HCT116 (cell line): ENCODE measurements at regions of chr13 and their contacts with region 1.

Region 1: GRCh38 chr13:26707122-26708006 is 53.2 kb downstream of the GPR12 start:
- DNase-seq: peak; percentile 27
- ATAC-seq: peak; percentile 89
- H3K4me3 ChIP-seq: no peak overlapping the region
- H3K27ac ChIP-seq: no peak overlapping the region
- H3K4me1 ChIP-seq: no peaks in the 10 kb centered on the region
- H3K27me3 ChIP-seq: peaks cover 21% of the 10 kb centered on the region
- CTCF ChIP-seq: peak; percentile 51 to 66 (median 62); a peak in 5 of 6 replicates
- POLR2A ChIP-seq: no peak
- RAD21 ChIP-seq: peak; percentile 66

Region 2: DNA sequence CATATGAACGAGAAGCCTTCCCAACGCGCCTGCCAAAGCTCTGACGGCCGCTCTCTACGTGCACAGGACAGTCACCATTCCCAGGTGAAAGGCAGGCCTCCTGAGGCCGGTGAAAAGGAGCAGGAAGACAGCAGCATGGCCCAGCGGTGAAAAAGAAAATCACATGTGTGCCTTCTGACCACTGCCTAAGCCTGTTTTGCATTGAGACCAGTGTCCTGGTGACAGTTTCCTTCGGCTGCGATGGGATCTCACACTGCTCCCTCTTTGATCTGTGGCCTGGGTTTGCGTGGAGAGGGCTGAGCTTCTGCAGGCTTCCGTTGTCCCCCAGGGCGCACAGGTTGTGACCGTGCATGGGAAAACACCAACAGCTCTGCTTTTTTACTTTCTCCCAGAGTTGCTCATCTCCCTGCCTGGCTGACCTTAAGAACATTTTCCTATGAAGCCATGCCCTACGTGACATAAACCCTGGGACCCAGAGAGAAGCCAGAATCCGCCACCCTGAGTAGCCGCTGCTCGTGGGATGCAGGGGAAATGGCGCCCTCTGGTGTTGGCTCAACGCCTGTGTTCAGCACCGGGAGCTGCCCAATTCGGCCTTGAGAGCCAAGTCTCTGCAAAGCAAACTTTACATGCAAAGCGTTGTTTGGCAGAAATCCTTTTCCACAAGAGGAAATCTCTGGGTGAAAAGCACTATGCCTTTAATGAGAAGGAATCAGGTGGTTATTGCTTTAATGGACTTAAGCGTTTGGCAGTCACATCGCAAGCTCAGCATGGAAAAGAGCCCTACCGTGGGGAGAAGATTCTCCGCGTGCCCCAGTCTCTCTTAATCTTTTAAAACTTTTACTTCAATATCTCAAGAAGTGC is 165.4 kb after region 1 on chr13:
- CTCF ChIA-PET with region 1: interaction called, 17 read pairs
- POLR2A ChIA-PET with region 1: no interaction called
- RAD21 ChIA-PET with region 1: interaction called in 1 of 2 experiments, 4 read pairs
- intact Hi-C with region 1: loop called (anchors 1 kb)
- DNase-seq: peak; percentile 24
- ATAC-seq: peak; percentile 97
- H3K4me3 ChIP-seq: no peak overlapping the region
- H3K27ac ChIP-seq: no peak overlapping the region
- H3K4me1 ChIP-seq: no peaks in the 10 kb centered on the region
- H3K27me3 ChIP-seq: peaks cover 24% of the 10 kb centered on the region; the same call in 1 of the 2 replicates
- CTCF ChIP-seq: peak; percentile 34 to 97 (median 96); a peak in 5 of 6 replicates
- POLR2A ChIP-seq: no peak
- RAD21 ChIP-seq: peak; percentile 61

Region 3: DNA sequence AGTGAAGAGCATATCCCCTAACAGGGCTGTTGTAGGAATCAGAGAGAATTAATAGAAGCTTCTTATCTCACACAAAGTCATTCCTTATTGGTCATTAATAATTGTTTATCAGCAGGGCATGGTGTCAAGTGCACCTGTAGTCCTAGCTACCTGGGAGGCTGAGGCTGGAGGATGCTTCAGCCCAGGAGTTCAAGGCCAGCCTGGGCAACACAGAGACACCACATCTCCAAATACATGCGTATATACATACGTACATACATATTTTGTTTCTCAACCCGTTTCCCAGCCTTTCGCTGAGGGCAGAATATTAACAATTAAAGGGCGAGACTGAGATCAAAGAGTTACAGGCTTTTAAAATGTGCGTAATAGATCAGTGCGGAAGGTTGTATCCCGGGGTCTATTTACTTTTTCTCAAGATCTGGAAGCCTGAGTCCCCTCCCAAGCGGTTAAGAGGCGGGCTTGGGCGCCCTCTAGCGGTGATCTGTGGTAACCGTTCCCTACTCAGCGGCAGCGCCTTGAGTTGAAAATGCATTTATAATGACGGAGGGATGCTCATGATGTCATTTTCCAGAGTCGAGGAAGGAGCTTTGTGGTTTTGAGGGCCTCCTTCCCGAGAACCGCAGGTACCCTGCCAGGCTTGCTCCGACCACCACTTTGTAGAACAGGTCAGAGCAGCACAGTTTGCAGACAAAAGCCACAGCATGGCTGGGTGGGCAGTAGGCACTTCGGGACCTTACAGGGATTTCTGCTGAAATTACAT is 222.8 kb after region 1 on chr13:
- CTCF ChIA-PET with region 1: interaction called, 5 read pairs
- POLR2A ChIA-PET with region 1: no interaction called
- RAD21 ChIA-PET with region 1: interaction called in 1 of 2 experiments, 4 read pairs
- intact Hi-C with region 1: loop called (anchors 1 kb)
- DNase-seq: peak; percentile 54
- ATAC-seq: peak; percentile 95
- H3K4me3 ChIP-seq: peak overlapping the region; percentile 2 to 23; a peak in 1 of 4 replicates
- H3K27ac ChIP-seq: no peak overlapping the region
- H3K4me1 ChIP-seq: peaks cover 0 to 5% of the 10 kb centered on the region in 2 experiments; a peak in 1 of 4 replicates
- H3K27me3 ChIP-seq: peaks cover 13% of the 10 kb centered on the region
- CTCF ChIP-seq: peak; percentile 56 to 97 (median 89)
- POLR2A ChIP-seq: no peak
- RAD21 ChIP-seq: peak; percentile 73